ENCODE measurements at regions of chr13 and their contacts with region 1.

Region 1: GRCh38 chr13:79194272-79194671 is 211.8 kb downstream of the RBM26 start:
- DNase-seq: peak; percentile 89
- H3K4me3 ChIP-seq: peak overlapping the region; percentile 54
- H3K27ac ChIP-seq: peak overlapping the region; percentile 63
- H3K4me1 ChIP-seq: peaks cover 57% of the 10 kb centered on the region
- CTCF ChIP-seq: no peak

Region 2: GRCh38 chr13:78658635-78659449 is 535.4 kb before region 1 on chr13 and contains the start of gene OBI1:
- CTCF ChIA-PET with region 1: no interaction called
- POLR2A ChIA-PET with region 1: no interaction called
- intact Hi-C with region 1: loop called (anchors 10 kb)
- DNase-seq: peak; percentile 90
- H3K4me3 ChIP-seq: peak within 1 kb of the TSS; percentile 93
- H3K27ac ChIP-seq: peak within 1 kb of the TSS; percentile 75
- H3K4me1 ChIP-seq: peaks cover 18% of the 10 kb centered on the region
- CTCF ChIP-seq: no peak
- total RNA-seq, gene OBI1: 17.9 and 18.0 TPM in 2 replicates

Region 3: GRCh38 chr13:79018166-79018565 is 176.1 kb before region 1 on chr13:
- CTCF ChIA-PET with region 1: no interaction called
- POLR2A ChIA-PET with region 1: no interaction called
- intact Hi-C with region 1: no loop called
- DNase-seq: peak; percentile 3
- H3K4me3 ChIP-seq: no peak overlapping the region
- H3K27ac ChIP-seq: no peak overlapping the region
- H3K4me1 ChIP-seq: no peaks in the 10 kb centered on the region
- CTCF ChIP-seq: peak; percentile 41; the same call in 1 of the 2 replicates

Region 4: GRCh38 chr13:79096099-79096498 is 98.2 kb before region 1 on chr13:
- CTCF ChIA-PET with region 1: no interaction called
- POLR2A ChIA-PET with region 1: interaction called, 10 read pairs
- intact Hi-C with region 1: no loop called
- DNase-seq: no peak
- H3K4me3 ChIP-seq: no peak overlapping the region
- H3K27ac ChIP-seq: no peak overlapping the region
- H3K4me1 ChIP-seq: no peaks in the 10 kb centered on the region
- CTCF ChIP-seq: no peak

Region 5: DNA sequence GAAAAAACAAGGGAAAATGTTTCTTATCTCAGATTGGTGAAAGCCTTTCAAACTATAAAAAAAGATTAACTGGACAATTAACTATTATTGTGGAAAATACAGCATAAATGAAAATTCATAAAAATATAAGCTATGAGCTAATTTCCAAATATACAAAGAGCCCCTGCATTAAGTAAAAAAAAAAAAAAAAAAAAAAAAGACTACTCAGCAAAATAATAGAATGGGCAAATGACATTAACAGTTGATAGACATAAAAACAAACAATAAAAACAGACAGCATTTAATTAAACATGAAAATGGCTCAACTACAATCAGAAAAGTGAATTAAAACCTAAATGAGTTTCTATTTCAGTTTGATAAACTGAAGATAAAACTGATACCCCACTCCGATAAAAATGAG is 134.2 kb after region 1 on chr13:
- CTCF ChIA-PET with region 1: no interaction called
- POLR2A ChIA-PET with region 1: no interaction called
- intact Hi-C with region 1: loop called (anchors 5 kb)
- DNase-seq: no peak
- H3K4me3 ChIP-seq: no peak overlapping the region
- H3K27ac ChIP-seq: no peak overlapping the region
- H3K4me1 ChIP-seq: no peaks in the 10 kb centered on the region
- CTCF ChIP-seq: no peak

Region 6: DNA sequence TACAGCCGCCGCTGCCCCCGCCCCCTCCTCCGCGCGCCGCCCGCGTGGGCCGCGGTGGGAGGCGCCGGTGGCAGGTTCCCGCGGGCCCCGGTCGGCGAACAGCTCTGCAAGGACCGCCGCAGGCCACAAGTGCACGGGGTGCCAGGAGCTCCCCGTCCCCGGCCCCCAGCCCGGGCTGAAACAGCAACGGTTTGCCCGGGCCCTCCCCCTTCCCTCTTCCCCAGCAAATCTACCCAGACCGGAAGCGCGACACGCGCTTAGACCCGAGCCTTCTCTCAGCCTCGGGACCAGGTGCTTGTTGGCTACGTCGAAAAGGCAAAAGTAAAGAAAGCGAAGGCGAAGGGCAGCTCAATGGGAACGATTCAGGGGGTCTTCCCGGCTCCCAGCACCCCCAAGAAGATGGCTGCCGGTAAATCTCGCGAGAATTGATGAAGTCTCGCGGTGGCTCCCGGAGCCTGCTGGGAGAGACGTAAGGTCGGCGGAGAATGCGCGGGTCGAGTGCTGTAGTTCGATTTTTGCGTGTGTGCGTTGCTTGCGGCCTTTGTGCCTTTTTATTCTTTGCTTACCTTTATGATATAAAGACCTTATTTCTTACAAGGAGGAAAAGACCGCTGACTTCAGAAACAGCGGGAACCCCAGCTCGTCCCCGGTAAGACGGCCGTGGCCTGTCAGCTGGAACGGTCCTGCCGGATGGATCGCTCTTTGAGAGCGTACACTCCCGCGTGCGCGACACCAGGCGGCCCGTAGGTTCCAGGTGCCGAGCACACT is 211.7 kb after region 1 on chr13 and contains the start of gene RBM26:
- CTCF ChIA-PET with region 1: no interaction called
- POLR2A ChIA-PET with region 1: no interaction called
- intact Hi-C with region 1: loop called (anchors 5 kb)
- DNase-seq: peak; percentile 95
- H3K4me3 ChIP-seq: peak within 1 kb of the TSS; percentile 98
- H3K27ac ChIP-seq: peak within 1 kb of the TSS; percentile 94
- H3K4me1 ChIP-seq: peaks cover 37% of the 10 kb centered on the region
- CTCF ChIP-seq: 0 out of 2 replicates have a peak, but pooled peaks have one; percentile 27
- total RNA-seq, gene RBM26: 44.1 and 46.1 TPM in 2 replicates